Calu3 (cell line): ENCODE measurements at regions of chr12 and their contacts with region 1.

Region 1: GRCh38 chr12:82517027-82517426 is 158.7 kb downstream of the METTL25 start:
- DNase-seq: peak; percentile 39
- H3K4me3 Mint-ChIP-seq: no peak overlapping the region
- H3K27ac Mint-ChIP-seq: no peak overlapping the region
- H3K4me1 Mint-ChIP-seq: no peaks in the 10 kb centered on the region
- H3K27me3 Mint-ChIP-seq: no peaks in the 10 kb centered on the region
- CTCF ChIP-seq: peak; percentile 50

Region 2: GRCh38 chr12:82383930-82384552 is 133.0 kb before region 1 on chr12:
- CTCF ChIA-PET with region 1: no interaction called
- intact Hi-C with region 1: loop called (anchors 2 kb)
- DNase-seq: peak; percentile 20
- H3K4me3 Mint-ChIP-seq: no peak overlapping the region
- H3K27ac Mint-ChIP-seq: no peak overlapping the region
- H3K4me1 Mint-ChIP-seq: no peaks in the 10 kb centered on the region
- H3K27me3 Mint-ChIP-seq: no peaks in the 10 kb centered on the region
- CTCF ChIP-seq: no peak